Calu3 (cell line): ENCODE measurements at regions of chr2 and their contacts with region 1.

Region 1: GRCh38 chr2:56749152-56749752 is 565.5 kb downstream of the CCDC85A start:
- DNase-seq: no peak
- H3K4me3 Mint-ChIP-seq: no peak overlapping the region
- H3K27ac Mint-ChIP-seq: no peak overlapping the region
- H3K4me1 Mint-ChIP-seq: peaks cover 11% of the 10 kb centered on the region
- H3K27me3 Mint-ChIP-seq: no peaks in the 10 kb centered on the region
- CTCF ChIP-seq: no peak

Region 2: DNA sequence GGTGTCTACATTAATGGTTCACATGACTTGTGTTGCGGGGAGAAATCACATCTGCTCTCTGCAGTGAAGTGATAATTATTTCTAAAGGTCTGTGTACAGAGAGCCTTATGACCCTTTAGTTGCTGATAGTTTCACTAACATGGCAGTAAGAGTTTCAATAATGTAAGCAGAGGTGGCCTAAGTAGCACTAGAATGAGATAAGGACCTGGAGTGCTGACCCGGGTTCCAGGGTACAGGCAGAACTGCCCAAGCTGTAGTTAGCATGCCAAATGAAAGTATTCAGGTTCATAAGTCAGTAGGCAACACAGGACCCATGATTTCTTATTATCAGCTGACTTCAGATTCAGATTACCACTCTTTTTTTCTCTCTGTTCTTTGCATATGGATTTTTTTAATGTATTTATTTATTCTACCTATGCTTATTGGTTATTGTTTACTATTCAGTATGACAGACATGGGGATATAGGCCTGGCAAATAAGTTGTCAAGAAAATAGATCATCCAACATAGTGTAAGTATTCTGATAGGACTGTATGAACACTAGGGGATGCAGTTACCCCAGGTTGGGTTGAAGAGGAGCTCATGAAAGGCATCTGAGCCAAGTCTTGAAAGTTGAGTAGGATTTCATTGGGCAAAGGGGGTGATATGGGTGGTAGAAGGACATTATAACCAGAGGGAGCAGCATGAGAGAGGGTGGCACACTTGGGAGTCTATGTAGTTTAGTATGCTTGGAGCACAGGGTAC is 460.2 kb before region 1 on chr2:
- CTCF ChIA-PET with region 1: interaction called, 3 read pairs
- intact Hi-C with region 1: loop called (anchors 10 kb)
- DNase-seq: no peak
- H3K4me3 Mint-ChIP-seq: no peak overlapping the region
- H3K27ac Mint-ChIP-seq: no peak overlapping the region
- H3K4me1 Mint-ChIP-seq: peaks cover 23% of the 10 kb centered on the region
- H3K27me3 Mint-ChIP-seq: no peaks in the 10 kb centered on the region
- CTCF ChIP-seq: no peak

Region 3: DNA sequence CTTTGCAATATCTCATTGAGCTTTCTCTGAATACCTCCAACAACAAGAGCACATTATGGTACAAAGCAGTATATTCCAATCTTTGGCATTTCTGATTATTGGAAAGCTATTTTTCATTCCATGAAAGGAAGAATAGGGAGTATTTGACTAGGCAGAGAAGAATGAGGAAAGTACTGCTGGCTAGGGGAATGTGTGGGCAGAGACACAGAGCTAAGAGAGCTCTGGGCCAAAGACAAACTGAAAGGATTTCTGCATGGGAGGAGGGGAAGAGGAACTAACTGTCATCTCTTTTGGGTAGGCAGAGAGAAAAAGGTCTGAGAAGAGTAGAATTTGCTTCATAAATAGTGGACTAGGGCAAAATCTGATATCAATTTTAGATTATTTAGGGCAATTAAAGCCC is 414.6 kb before region 1 on chr2:
- CTCF ChIA-PET with region 1: no interaction called
- intact Hi-C with region 1: no loop called
- DNase-seq: no peak
- H3K4me3 Mint-ChIP-seq: no peak overlapping the region
- H3K27ac Mint-ChIP-seq: no peak overlapping the region
- H3K4me1 Mint-ChIP-seq: no peaks in the 10 kb centered on the region
- H3K27me3 Mint-ChIP-seq: no peaks in the 10 kb centered on the region
- CTCF ChIP-seq: no peak

Region 4: GRCh38 chr2:56444339-56444738 is 304.9 kb before region 1 on chr2:
- CTCF ChIA-PET with region 1: interaction called, 3 read pairs
- intact Hi-C with region 1: loop called (anchors 10 kb)
- DNase-seq: peak; percentile 83
- H3K4me3 Mint-ChIP-seq: no peak overlapping the region
- H3K27ac Mint-ChIP-seq: peak overlapping the region; percentile 92
- H3K4me1 Mint-ChIP-seq: peaks cover 42% of the 10 kb centered on the region
- H3K27me3 Mint-ChIP-seq: no peaks in the 10 kb centered on the region
- CTCF ChIP-seq: no peak

Region 5: DNA sequence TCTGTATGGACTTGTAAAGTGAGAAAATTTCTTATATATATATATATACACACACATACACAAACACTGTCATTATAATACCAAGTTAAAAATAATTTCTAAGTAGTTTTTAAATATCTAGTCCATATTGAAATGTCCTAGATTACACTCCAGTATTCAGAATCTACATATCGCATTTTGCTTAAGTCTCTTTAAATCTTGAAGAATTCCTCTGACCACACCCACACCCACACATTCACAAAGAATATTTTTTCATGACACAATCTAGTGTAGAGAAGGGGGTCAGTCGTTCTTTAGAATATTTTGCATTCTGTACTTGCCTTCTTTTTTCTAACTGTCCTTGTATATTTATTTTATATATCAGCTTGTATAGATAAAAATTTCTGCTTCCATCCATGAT is 55.8 kb before region 1 on chr2:
- CTCF ChIA-PET with region 1: no interaction called
- intact Hi-C with region 1: no loop called
- DNase-seq: no peak
- H3K4me3 Mint-ChIP-seq: no peak overlapping the region
- H3K27ac Mint-ChIP-seq: no peak overlapping the region
- H3K4me1 Mint-ChIP-seq: no peaks in the 10 kb centered on the region
- H3K27me3 Mint-ChIP-seq: no peaks in the 10 kb centered on the region
- CTCF ChIP-seq: no peak